ENCODE measurements at regions of chr15 and their contacts with region 1.

Region 1: DNA sequence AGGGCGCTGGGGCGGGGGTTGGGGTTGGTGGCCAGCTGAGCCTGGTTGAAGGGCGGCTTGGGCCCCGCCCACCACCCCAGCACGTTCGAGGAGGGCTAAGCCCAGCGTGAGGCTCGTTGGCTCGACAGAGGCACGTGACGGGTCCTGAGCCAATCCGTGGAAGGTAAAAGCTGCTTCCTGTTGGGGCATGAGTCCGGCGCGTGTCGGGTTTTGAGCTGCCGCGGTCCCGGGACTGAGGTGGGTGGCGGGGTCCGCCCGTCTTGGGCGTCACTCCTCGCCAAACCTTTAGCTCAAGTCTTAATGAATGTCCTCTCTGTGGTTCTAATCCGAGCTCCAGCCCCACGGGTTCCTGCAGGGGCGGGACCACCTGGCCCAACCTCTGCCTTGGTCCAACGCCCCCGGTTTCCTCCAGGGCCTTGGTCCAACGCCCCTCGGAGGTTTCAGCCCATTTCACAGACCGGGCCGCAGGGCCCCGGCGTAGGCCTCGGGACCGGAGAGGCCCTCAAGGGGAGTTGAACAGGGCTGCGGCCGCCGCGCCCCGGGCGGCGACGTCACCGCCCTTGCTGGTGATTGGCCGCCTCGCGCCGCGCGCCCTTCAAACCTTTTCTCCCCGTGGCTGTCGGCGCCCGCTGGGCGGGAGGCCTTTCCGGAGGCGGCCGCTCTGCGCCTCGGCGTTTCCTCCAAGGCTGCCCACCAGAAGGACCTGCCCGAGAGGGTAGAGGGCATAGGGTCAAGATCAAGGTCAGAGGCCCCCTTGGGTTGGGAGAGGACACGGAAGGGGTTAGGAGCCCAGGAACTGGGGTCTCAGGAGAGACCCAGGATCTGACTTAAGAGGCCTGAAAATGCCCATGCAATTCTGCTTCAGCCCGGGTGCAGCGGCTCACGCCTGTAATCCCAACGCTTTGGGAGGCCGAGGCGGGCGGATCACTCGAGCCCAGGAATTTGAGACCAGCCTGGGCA is at the start of gene RCCD1:
- DNase-seq: peak; percentile 94
- ATAC-seq: peak; percentile 95
- H3K4me3 Mint-ChIP-seq: peak within 1 kb of the TSS; percentile 84
- H3K27ac Mint-ChIP-seq: peak within 1 kb of the TSS; percentile 95
- H3K4me1 Mint-ChIP-seq: peaks cover 13% of the 10 kb centered on the region
- H3K27me3 Mint-ChIP-seq: no peaks in the 10 kb centered on the region
- total RNA-seq, gene RCCD1: 28.9 to 37.4 TPM

Region 2: DNA sequence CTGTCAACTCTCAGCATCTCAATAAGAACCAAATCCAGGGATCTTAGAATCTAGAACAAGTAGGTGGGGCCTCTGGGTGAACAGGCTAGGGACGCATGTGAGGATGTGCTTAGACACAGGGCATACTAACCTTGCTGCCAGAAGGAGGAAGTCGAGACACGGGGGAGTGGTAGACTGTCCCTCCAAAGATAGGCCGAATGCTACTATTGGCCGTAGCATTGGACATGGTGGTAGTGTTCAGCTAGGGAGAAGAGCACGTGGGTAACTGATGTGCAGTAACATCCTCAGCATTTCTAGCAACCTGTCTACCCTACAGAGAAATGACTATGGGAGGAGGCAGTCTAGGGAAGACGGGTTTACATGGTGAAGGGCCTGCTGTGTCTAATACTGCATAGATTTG is 15.3 kb after region 1 on chr15:
- CTCF ChIA-PET with region 1: interaction called, 19 read pairs
- POLR2A ChIA-PET with region 1: no interaction called
- intact Hi-C with region 1: no loop called
- DNase-seq: no peak
- ATAC-seq: no peak
- H3K4me3 Mint-ChIP-seq: no peak overlapping the region
- H3K27ac Mint-ChIP-seq: no peak overlapping the region
- H3K4me1 Mint-ChIP-seq: no peaks in the 10 kb centered on the region
- H3K27me3 Mint-ChIP-seq: no peaks in the 10 kb centered on the region

Region 3: GRCh38 chr15:91022075-91022835 is 67.3 kb after region 1 on chr15 and contains the start of gene VPS33B:
- CTCF ChIA-PET with region 1: interaction called, 5 read pairs
- POLR2A ChIA-PET with region 1: interaction called, 3 read pairs
- intact Hi-C with region 1: loop called in 1 of 2 experiments (anchors 1 kb)
- DNase-seq: peak; percentile 84
- ATAC-seq: peak; percentile 81
- H3K4me3 Mint-ChIP-seq: peak within 1 kb of the TSS; percentile 89
- H3K27ac Mint-ChIP-seq: peak within 1 kb of the TSS; percentile 61
- H3K4me1 Mint-ChIP-seq: peaks cover 37% of the 10 kb centered on the region
- H3K27me3 Mint-ChIP-seq: no peaks in the 10 kb centered on the region
- total RNA-seq, gene VPS33B: 22.8 to 25.9 TPM

Region 4: GRCh38 chr15:91049378-91050127 is 94.6 kb after region 1 on chr15:
- CTCF ChIA-PET with region 1: interaction called, 16 read pairs
- POLR2A ChIA-PET with region 1: no interaction called
- intact Hi-C with region 1: loop called (anchors 1 kb)
- DNase-seq: peak; percentile 68
- ATAC-seq: peak; percentile 96
- H3K4me3 Mint-ChIP-seq: no peak overlapping the region
- H3K27ac Mint-ChIP-seq: no peak overlapping the region
- H3K4me1 Mint-ChIP-seq: peaks cover 23% of the 10 kb centered on the region
- H3K27me3 Mint-ChIP-seq: peaks cover 11% of the 10 kb centered on the region

Measured in activated CD4-positive, alpha-beta T cell treated with anti-CD3 and anti-CD28 coated beads for 36 hours (primary cell).